ENCODE measurements at regions of chr3 and their contacts with region 1.

Region 1: DNA sequence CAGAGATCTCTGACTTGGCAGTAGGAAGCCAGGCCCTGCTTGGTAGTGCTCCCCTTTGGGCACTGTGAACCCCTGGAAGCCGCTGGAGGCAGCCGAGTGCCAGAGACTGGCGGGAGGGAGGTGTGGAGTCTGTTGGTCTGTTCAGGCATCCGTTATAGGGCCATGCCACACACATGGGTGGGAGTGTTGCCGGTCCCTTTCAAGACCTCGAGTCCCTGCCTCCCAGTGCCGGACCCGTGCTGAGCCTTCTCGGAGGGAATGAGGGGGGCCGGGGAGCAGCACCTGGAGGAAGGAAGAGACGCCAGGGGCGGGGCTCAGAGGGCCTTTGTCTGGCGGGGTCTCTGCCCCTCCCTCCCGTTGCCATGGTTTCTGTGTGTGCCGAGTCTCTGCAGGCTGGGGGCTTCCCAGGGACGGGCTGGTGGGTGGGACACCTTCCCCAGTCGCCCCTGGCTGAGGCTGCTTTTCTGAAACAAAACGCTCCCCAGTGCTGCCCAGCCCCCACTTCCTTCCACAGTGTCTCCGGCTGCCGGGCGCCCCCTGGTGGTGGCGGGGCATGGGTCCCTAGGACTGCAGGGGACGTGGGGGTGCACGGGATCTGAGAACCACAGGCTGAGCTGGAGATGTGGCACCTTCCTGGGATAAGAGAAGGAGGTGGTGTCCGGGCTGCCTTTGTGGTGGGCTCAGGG is 10.0 kb downstream of the GNAI2 start:
- DNase-seq: peak; percentile 87
- CTCF ChIP-seq: peak; percentile 99

Region 2: DNA sequence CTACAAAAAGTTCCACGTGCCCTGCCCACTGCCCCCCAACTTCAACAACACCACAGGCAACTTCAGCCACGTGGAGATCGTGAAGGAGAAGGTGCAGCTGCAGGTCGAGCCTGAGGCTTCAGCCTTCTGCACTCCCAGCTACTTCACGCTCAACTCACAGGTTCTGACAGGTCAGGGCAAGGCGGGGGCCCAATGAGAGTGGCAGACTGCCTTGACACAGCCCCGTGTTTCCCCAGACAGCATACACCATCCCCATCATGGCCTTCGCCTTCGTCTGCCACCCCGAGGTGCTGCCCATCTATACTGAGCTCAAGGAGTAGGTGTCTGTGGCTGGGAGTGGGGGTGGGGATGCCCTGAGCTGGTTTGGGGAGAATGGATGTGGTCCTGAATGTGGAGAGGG is 28.3 kb before region 1 on chr3:
- CTCF ChIA-PET with region 1: interaction called, 10 read pairs
- POLR2A ChIA-PET with region 1: interaction called, 3 read pairs
- DNase-seq: no peak
- CTCF ChIP-seq: no peak

Region 3: GRCh38 chr3:50260027-50260941 is 14.3 kb after region 1 on chr3:
- CTCF ChIA-PET with region 1: interaction called, 152 read pairs
- POLR2A ChIA-PET with region 1: interaction called, 3 read pairs
- DNase-seq: peak; percentile 98
- CTCF ChIP-seq: peak; percentile 99

Region 4: DNA sequence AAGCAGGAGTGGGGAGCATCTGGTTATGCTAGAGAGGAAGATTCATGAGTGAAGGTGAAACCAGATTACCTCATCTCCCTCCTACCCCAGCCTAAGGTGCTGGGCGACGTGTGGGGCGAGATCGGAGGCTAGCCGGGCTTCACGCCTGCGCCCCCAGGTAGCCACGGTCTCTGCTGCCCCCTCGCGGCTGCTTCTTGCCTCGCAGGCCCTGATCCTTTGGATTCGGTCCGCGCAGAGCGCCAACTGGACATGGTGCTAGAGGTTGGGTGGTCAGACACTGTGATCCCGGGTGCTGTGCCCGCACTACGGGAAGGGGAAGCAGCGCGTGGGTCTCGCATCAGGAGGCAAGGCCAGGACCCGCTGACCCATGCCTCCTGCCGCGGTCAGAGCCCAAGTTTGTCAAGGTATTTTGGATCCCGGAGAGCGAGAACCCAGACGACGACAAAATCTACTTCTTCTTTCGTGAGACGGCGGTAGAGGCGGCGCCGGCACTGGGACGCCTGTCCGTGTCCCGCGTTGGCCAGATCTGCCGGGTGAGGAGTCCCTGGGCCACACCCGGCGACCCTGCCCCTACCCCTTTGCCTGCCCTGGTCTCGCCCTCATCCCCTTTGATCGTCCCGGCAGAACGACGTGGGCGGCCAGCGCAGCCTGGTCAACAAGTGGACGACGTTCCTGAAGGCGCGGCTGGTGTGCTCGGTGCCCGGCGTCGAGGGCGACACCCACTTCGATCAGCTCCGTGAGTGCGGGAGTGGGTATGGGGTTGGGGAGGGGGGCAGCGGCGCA is 27.1 kb after region 1 on chr3:
- CTCF ChIA-PET with region 1: interaction called, 19 read pairs
- POLR2A ChIA-PET with region 1: no interaction called
- DNase-seq: peak; percentile 98
- CTCF ChIP-seq: peak; percentile 98

Region 5: DNA sequence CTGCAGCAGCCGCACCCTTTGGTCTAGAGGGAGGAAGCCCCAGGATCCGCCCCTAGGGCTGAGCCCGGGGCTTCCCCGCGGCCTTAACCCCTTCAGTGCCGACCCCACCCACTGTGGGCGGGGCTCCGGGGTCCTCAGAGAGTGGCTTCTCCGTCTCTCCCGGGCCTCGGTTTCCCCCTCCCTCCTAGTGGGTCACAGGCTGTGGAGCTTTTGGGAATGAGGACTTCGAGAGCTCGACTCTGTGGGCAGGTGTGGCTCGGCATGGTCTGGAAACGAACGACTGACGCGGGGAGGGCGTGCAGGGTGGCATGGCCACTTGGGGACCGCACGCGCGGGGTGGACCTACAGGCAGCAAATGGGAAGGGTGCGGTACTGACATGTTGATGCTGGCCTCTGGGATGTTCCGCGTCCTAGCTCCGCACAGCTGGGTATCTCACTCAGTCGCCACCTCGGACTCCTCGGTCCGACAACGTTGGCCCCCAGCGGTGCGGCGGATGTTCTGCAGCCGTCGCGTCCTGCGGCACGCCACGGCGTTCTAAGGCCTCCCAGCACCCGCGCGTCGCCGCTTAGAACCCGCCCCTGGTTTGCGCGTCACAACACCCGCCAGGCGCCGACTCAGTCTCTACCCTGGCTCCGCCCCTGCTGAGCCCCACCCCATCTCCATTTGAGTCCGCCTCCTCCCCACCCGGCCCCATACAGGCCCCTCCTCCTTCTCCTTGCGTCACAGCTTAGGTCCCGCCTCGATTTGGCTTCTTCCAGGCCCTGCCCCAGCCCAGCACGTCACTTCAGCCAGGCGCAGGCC is 53.1 kb after region 1 on chr3 and contains the starts of genes HYAL3 and NAA80:
- CTCF ChIA-PET with region 1: interaction called, 10 read pairs
- POLR2A ChIA-PET with region 1: no interaction called
- DNase-seq: peak; percentile 99
- CTCF ChIP-seq: peak; percentile 22

Measured in GM10248 (cell line).